ENCODE measurements at regions of chr17 and their contacts with region 1.

Region 1: DNA sequence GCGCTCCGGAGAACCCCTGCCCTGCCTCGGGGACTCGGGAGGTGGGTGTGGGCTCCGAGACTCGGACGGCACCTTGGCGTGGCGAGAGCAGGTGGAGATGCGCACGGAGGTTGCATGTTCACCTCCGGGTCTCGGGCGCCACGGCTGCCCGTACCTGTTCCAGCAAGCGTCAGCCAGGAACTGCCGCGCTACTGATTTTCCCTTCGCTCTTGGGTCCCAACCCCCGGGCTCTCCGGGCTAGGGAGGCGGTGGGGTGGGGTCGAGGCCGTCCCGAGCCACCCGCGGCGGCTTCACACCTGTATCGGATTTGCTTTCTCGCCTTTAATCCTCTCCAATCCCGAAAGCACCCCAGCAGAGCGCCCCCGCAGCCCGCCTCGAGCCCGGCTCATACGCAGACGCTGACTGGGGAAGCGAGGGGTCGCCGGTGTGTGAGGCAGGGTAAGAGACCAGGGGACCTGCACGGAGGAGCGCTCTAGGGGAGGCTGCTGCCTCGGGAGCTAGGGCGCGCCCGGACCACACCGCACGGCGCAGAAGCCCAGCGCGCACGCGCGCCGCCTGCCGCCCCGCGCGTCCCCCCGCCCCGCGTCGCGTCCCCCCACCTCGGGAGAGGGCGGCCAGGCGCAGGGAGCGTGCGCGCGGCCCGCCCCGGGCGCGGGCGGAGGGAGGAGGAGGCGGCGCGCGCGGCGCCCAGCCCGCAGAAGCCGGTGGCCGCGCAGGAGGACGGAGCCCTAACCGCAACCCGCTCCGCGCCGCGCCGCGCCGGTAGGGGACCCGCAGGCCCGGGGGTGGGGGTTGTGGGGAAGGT is at the start of gene DUSP14:
- DNase-seq: peak; percentile 70
- ATAC-seq: peak; percentile 77
- H3K4me3 ChIP-seq: peak within 1 kb of the TSS; percentile 91 to 99 (median 92)
- H3K27ac ChIP-seq: peak within 1 kb of the TSS; percentile 97
- H3K4me1 ChIP-seq: peaks cover 51% of the 10 kb centered on the region
- H3K27me3 ChIP-seq: no peaks in the 10 kb centered on the region; a peak in 1 of 5 replicates
- CTCF ChIP-seq: peak; percentile 38
- EP300 ChIP-seq: no peak
- POLR2A ChIP-seq: peak; percentile 81 to 95
- RAD21 ChIP-seq: no peak
- total RNA-seq, gene DUSP14: 33.5 and 44.1 TPM in 2 replicates

Region 2: DNA sequence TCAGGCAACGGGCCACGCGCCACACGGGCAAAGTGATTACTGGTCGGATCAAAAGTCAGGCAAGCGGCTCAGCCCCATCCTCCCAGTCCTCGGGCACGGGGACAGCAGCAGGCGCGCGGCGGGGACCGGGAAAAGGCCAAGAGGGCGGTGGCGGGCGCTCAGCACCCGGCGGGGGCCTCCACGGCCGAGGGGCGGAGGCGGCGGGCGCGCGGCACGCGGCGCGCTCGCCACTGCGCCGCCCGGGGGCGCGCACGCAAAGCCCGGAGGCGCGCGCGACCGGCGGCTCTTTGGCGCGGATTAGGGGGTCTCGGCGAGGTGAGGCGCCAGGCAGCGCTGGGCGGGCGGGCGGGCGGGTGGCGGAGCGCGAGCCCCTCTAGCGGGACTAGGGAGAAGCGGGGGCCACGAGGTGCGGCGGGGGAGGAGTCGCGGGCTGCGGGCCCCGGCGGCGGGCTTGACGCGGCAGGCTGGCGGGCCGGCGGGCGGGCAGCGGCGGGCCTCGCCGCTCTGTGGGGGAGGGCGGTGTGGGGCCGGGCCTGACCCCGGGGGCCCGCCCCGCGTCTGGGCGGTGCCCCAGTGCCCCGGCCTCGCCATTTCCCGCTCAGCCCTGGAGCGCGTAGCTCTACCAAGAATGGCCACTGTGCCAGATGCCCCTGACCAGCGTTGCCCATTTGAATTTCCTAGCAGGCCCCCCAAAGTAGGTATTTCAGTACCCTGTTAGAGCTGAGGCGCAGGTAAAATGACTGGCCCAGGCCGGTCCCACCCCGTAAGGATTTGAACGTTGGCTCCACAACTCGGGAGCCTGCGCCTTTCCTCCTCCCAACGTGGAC is 82.6 kb before region 1 on chr17 and contains the starts of genes ACACA and TADA2A:
- CTCF ChIA-PET with region 1: no interaction called
- POLR2A ChIA-PET with region 1: interaction called, 7 read pairs
- in situ Hi-C with region 1: no loop called
- intact Hi-C with region 1: loop called (anchors 2 kb)
- DNase-seq: peak; percentile 63
- ATAC-seq: peak; percentile 96
- H3K4me3 ChIP-seq: peak within 1 kb of the TSS; percentile 75 to 87 (median 76)
- H3K27ac ChIP-seq: peak within 1 kb of the TSS; percentile 89
- H3K4me1 ChIP-seq: peaks cover 34% of the 10 kb centered on the region
- H3K27me3 ChIP-seq: no peaks in the 10 kb centered on the region; a peak in 1 of 5 replicates
- CTCF ChIP-seq: no peak
- EP300 ChIP-seq: 0 out of 4 replicates have a peak, but pooled peaks of 1 of the 2 experiments have one; percentile 24
- POLR2A ChIP-seq: peak; percentile 86 to 90
- RAD21 ChIP-seq: peak; percentile 34; the same call in 1 of the 2 replicates
- total RNA-seq, gene ACACA: 47.2 and 66.3 TPM in 2 replicates
- total RNA-seq, gene TADA2A: 13.0 and 14.0 TPM in 2 replicates

Region 3: DNA sequence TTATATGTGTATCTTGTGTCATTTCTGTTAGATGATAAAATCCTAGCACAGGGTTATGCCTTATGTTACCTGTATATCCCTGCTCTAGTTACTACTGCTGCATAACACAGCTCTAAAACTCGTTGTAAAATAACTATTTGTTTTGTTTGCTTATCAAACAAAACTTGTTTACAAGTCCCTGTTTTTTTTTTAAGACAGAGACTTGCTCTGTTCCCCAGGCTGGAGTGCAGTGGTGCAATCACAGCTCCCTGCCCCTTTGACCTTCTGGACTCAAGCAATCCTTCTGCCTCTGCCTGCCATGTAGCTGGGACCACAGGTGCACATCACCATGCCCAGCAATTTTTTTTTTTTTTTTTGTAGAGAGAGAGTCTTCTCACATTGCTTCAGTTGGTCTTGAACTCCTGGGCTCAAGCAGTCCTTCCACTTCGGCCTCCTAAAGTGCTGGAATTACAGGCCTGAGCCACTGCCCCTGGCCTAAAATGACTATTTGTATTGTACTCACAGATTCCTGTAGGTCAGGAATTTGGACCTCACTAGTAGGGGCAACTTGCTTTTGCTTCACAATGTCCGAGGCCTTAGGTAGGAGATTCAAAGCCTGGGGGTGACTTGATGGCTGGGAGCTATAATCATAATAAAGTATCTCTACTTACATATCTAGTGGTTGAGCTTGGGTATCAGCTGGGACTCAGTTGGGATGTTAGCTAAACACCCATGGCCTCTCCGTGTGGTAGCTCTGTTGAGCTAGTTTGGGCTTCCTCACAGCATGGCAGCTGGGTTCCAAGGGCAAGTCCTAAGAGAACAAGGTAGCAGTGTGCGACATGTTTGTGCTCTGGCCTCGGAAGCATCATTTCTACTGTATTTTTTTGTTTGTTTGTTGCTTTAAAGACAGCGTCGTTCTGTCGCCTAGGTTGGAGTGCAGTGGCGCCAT is 12.9 kb after region 1 on chr17:
- CTCF ChIA-PET with region 1: interaction called, 4 read pairs
- POLR2A ChIA-PET with region 1: interaction called, 25 read pairs
- in situ Hi-C with region 1: no loop called
- intact Hi-C with region 1: no loop called
- DNase-seq: peak; percentile 94
- ATAC-seq: peak; percentile 89
- H3K4me3 ChIP-seq: peak overlapping the region in 2 of 3 experiments; percentile 14 to 49; a peak in 3 of 6 replicates
- H3K27ac ChIP-seq: peak overlapping the region; percentile 86
- H3K4me1 ChIP-seq: peaks cover 74% of the 10 kb centered on the region
- H3K27me3 ChIP-seq: no peaks in the 10 kb centered on the region
- CTCF ChIP-seq: no peak
- EP300 ChIP-seq: peak; percentile 80 to 88; a peak in 3 of 4 replicates
- POLR2A ChIP-seq: 0 out of 4 replicates have a peak, but pooled peaks of 1 of the 2 experiments have one; percentile 16
- RAD21 ChIP-seq: no peak

Region 4: DNA sequence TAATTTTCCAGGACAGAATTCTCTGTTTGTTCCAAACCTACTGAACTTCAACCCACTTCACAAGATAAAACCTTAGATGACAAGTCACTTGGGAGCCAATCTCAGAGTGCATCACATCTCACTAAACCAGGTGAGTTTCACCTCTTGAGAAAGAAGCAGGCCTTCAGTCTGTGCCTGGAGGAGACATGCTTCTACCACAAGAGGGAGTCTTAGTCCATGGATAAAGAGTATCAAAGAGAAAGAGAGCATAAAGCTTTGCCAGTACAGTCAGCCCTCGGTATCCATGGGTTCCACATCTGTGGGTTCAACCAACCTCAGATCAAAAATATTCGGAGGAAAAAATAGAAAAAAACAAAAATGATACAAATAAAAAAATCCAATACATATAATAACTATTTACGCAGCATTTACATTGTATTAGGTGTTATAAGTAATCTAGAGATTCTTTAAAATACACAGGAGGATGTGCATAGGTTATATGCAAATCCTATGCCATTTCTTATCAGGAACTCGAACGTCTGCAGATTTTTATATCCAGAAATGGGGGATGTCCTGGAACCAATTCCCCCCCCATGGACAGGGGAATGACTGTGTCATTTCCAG is 38.0 kb after region 1 on chr17:
- CTCF ChIA-PET with region 1: no interaction called
- POLR2A ChIA-PET with region 1: no interaction called
- in situ Hi-C with region 1: no loop called
- intact Hi-C with region 1: no loop called
- DNase-seq: peak; percentile 63
- ATAC-seq: peak; percentile 83
- H3K4me3 ChIP-seq: no peak overlapping the region
- H3K27ac ChIP-seq: no peak overlapping the region
- H3K4me1 ChIP-seq: no peaks in the 10 kb centered on the region
- H3K27me3 ChIP-seq: no peaks in the 10 kb centered on the region
- CTCF ChIP-seq: peak; percentile 70
- EP300 ChIP-seq: no peak
- POLR2A ChIP-seq: no peak
- RAD21 ChIP-seq: peak; percentile 50; the same call in 1 of the 2 replicates

Measured in HepG2 (cell line).